ENCODE measurements at regions of chr11 and their contacts with region 1.

Region 1: GRCh38 chr11:91248199-91248807 is 976.3 kb upstream of the FAT3 start:
- DNase-seq: peak; percentile 28
- ATAC-seq: no peak
- H3K4me3 ChIP-seq: no peak overlapping the region
- H3K27ac ChIP-seq: no peak overlapping the region
- H3K4me1 ChIP-seq: no peaks in the 10 kb centered on the region
- H3K27me3 ChIP-seq: no peaks in the 10 kb centered on the region
- CTCF ChIP-seq: peak; percentile 52
- EP300 ChIP-seq: no peak
- POLR2A ChIP-seq: no peak
- RAD21 ChIP-seq: no peak

Region 2: GRCh38 chr11:90250970-90251369 is 997.3 kb before region 1 on chr11:
- CTCF ChIA-PET with region 1: interaction called, 5 read pairs
- POLR2A ChIA-PET with region 1: no interaction called
- in situ Hi-C with region 1: no loop called
- intact Hi-C with region 1: loop called (anchors 2 kb)
- DNase-seq: peak; percentile 72
- ATAC-seq: peak; percentile 95
- H3K4me3 ChIP-seq: peak overlapping the region; percentile 37 to 49 (median 49); a peak in 4 of 6 replicates
- H3K27ac ChIP-seq: peak overlapping the region; percentile 33
- H3K4me1 ChIP-seq: no peaks in the 10 kb centered on the region
- H3K27me3 ChIP-seq: no peaks in the 10 kb centered on the region; a peak in 1 of 5 replicates
- CTCF ChIP-seq: no peak
- EP300 ChIP-seq: no peak
- POLR2A ChIP-seq: peak; percentile 42 to 57; a peak in 3 of 4 replicates
- RAD21 ChIP-seq: no peak

Region 3: DNA sequence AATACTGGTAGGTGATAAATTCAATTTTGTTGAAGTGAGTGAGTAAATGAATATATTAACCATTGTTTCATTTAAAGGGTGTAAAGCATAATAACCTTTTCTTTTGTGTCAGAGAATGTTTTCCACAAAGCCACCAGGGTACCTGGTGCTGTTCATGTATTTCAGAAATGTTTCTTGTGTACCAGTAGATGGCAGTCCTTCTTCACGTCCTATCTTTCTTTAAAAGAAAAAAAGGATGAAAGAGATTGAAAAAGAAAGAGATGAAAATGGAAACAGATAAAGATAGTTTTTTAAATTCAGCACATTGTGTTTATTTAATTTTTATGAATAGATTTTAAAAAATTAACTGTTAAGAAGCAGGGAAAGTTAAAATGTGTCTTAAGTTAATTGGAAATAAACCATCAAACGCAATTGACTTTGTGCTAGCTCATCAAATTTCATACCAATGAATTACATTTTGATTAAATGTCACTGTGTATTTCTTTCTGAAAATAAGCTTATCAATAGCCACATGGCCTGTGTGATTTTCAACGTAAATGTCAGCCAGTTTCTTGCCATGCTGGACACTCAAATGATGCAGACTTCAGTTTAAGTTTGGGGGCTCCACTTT is 960.0 kb before region 1 on chr11:
- CTCF ChIA-PET with region 1: no interaction called
- POLR2A ChIA-PET with region 1: no interaction called
- in situ Hi-C with region 1: no loop called
- intact Hi-C with region 1: loop called (anchors 1 kb)
- DNase-seq: peak; percentile 33
- ATAC-seq: peak; percentile 71
- H3K4me3 ChIP-seq: no peak overlapping the region
- H3K27ac ChIP-seq: no peak overlapping the region
- H3K4me1 ChIP-seq: 0 out of 2 replicates have a peak, but pooled peaks cover 9% of the 10 kb centered on the region
- H3K27me3 ChIP-seq: no peaks in the 10 kb centered on the region
- CTCF ChIP-seq: peak; percentile 57
- EP300 ChIP-seq: no peak
- POLR2A ChIP-seq: no peak
- RAD21 ChIP-seq: peak; percentile 20; the same call in 1 of the 2 replicates

Region 4: GRCh38 chr11:90476442-90477007 is 771.8 kb before region 1 on chr11:
- CTCF ChIA-PET with region 1: no interaction called
- POLR2A ChIA-PET with region 1: no interaction called
- in situ Hi-C with region 1: no loop called
- intact Hi-C with region 1: loop called (anchors 5 kb)
- DNase-seq: peak; percentile 29
- ATAC-seq: no peak
- H3K4me3 ChIP-seq: no peak overlapping the region
- H3K27ac ChIP-seq: no peak overlapping the region
- H3K4me1 ChIP-seq: no peaks in the 10 kb centered on the region
- H3K27me3 ChIP-seq: no peaks in the 10 kb centered on the region
- CTCF ChIP-seq: peak; percentile 42
- EP300 ChIP-seq: no peak
- POLR2A ChIP-seq: no peak
- RAD21 ChIP-seq: no peak

Region 5: DNA sequence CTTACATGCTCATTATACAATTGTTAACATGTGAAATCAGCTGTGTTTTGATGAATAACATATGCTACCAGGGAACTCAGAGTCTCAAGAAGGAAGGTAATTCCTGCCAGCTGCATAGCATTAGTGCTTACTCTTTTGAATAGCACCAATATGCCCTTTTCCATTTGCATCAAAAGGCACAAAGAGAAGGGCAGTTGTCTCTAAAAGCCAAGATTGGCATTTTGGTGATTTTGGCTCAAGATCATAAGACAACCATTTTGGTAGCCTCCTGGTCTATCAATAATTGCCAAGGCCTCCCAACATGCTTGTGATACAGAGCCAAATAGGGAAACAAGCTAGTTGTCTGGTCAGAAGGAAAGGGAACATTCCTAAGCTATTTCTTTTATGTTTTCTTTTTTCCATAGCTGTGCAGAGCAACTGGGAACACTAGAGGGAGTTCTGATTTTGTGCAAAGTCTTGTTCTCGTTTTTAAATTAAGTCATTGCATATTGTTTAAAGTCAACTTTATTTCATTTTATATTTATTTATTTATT is 608.8 kb before region 1 on chr11:
- CTCF ChIA-PET with region 1: no interaction called
- POLR2A ChIA-PET with region 1: no interaction called
- in situ Hi-C with region 1: no loop called
- intact Hi-C with region 1: loop called (anchors 10 kb)
- DNase-seq: no peak
- ATAC-seq: no peak
- H3K4me3 ChIP-seq: no peak overlapping the region
- H3K27ac ChIP-seq: no peak overlapping the region
- H3K4me1 ChIP-seq: peaks cover 10% of the 10 kb centered on the region; the same call in 1 of the 2 replicates
- H3K27me3 ChIP-seq: no peaks in the 10 kb centered on the region
- CTCF ChIP-seq: no peak
- EP300 ChIP-seq: no peak
- POLR2A ChIP-seq: no peak
- RAD21 ChIP-seq: no peak